ENCODE measurements at regions of chr2 and their contacts with region 1.

Region 1: GRCh38 chr2:137435184-137435583 is 529.1 kb upstream of the HNMT start:
- DNase-seq: no peak
- ATAC-seq: no peak
- H3K4me3 ChIP-seq: no peak overlapping the region
- H3K27ac ChIP-seq: no peak overlapping the region
- H3K4me1 ChIP-seq: no peaks in the 10 kb centered on the region
- H3K27me3 ChIP-seq: no peaks in the 10 kb centered on the region
- CTCF ChIP-seq: no peak
- POLR2A ChIP-seq: no peak

Region 2: GRCh38 chr2:136693966-136694365 is 741.2 kb before region 1 on chr2:
- intact Hi-C with region 1: loop called in 1 of 10 experiments (anchors 10 kb)
- DNase-seq: no peak
- ATAC-seq: no peak
- H3K4me3 ChIP-seq: no peak overlapping the region
- H3K27ac ChIP-seq: no peak overlapping the region
- H3K4me1 ChIP-seq: no peaks in the 10 kb centered on the region
- H3K27me3 ChIP-seq: no peaks in the 10 kb centered on the region
- CTCF ChIP-seq: no peak
- POLR2A ChIP-seq: no peak

Region 3: DNA sequence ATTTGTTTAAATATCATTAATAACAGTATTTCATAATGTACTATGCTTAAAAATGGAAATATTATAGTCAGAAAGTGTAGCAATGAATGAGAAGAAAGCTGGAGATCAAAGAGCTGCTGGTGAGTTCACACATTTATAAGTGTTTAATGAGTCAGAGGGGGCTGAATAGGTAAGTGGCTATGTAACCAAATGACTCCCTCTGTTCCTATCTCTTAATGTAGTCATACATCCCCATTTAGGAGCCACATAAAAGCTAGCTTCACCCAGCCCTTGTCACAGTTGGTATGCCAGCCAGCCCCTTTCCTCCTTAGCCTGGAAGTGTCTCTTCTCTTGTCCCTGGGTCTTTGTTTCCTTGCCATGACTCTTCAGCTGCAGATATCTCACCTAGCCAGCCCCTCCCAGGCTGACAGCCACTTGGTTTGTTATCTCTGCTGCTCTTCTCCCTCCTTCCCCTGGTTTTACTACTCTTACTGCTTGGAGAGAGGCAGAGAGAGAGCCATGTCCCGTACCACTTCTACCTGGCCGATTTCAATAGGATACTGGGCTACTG is 90.5 kb after region 1 on chr2:
- intact Hi-C with region 1: no loop called
- DNase-seq: no peak
- ATAC-seq: no peak
- H3K4me3 ChIP-seq: no peak overlapping the region
- H3K27ac ChIP-seq: no peak overlapping the region
- H3K4me1 ChIP-seq: no peaks in the 10 kb centered on the region
- H3K27me3 ChIP-seq: no peaks in the 10 kb centered on the region
- CTCF ChIP-seq: no peak
- POLR2A ChIP-seq: no peak